ENCODE measurements at regions of chr12 and their contacts with region 1.

Region 1: DNA sequence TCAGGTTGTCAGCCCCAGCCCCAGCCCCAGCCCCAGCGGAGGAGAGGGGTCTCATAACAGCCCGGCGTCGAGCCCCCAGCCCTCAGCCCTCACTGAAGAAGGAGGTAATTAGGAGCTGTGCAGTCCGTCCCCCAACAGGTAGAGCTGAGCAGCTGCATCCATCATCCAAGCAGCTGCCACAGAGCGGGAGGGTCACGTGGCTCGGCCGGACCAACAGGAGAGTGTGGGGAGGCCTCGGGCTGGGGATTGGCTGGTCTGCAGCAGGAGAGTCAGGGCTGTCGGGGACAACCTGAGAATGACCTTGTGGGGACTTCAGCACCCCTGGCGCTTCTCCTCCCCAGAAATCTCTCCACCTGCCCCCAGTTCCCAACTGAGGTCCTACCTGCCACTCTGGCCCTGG is 29.6 kb downstream of the SMUG1 start:
- DNase-seq: peak; percentile 85
- ATAC-seq: peak; percentile 98
- H3K4me3 Mint-ChIP-seq: no peak overlapping the region
- H3K27ac Mint-ChIP-seq: no peak overlapping the region
- H3K4me1 Mint-ChIP-seq: peaks cover 57% of the 10 kb centered on the region
- H3K27me3 Mint-ChIP-seq: peaks cover 36% of the 10 kb centered on the region
- CTCF ChIP-seq: no peak

Region 2: DNA sequence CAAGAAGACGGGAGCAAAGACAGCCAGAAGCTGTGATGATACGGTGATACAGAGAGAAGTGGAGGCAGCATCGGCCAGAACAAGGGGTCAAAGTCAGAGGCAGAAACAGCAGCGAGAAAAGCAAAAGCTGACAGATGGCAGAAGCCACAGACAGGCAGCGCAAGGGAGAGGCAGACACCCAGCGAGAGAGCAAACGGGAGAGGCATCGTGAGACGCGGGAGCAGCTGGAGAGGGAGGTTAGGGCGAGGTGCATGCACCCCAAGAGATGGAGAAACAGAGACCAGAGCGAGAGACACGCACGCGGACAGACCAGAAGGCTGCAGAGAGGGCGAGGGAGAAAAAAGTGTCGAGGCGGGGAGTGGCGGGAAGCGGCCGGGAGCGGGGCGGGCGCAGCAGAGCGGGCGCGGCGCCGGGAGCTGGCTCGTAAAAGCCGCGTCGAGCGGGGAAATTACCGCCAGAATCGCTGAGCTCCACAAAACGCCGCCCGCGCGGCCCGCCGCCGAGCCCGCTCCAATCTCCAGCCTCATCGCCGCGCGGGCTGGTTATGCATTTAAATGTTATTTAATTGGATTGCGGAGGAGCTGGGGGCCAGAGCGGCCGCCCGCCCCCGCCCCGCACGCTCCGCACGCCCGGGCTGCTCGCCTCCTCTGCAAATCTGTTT is 14.1 kb after region 1 on chr12:
- CTCF ChIA-PET with region 1: interaction called, 14 read pairs
- POLR2A ChIA-PET with region 1: interaction called, 4 read pairs
- DNase-seq: peak; percentile 48
- ATAC-seq: peak; percentile 62
- H3K4me3 Mint-ChIP-seq: no peak overlapping the region
- H3K27ac Mint-ChIP-seq: no peak overlapping the region
- H3K4me1 Mint-ChIP-seq: peaks cover 3% of the 10 kb centered on the region; the same call in 1 of the 2 replicates
- H3K27me3 Mint-ChIP-seq: peaks cover 13% of the 10 kb centered on the region
- CTCF ChIP-seq: no peak

Measured in WTC11 (cell line).